ENCODE measurements at regions of chr3 and their contacts with region 1.

Region 1: GRCh38 chr3:35908366-35909232 is 269.3 kb downstream of the ARPP21 start:
- DNase-seq: peak; percentile 69
- H3K4me3 Mint-ChIP-seq: no peak overlapping the region
- H3K27ac Mint-ChIP-seq: no peak overlapping the region
- H3K4me1 Mint-ChIP-seq: no peaks in the 10 kb centered on the region
- H3K27me3 Mint-ChIP-seq: no peaks in the 10 kb centered on the region
- CTCF ChIP-seq: peak; percentile 72

Region 2: DNA sequence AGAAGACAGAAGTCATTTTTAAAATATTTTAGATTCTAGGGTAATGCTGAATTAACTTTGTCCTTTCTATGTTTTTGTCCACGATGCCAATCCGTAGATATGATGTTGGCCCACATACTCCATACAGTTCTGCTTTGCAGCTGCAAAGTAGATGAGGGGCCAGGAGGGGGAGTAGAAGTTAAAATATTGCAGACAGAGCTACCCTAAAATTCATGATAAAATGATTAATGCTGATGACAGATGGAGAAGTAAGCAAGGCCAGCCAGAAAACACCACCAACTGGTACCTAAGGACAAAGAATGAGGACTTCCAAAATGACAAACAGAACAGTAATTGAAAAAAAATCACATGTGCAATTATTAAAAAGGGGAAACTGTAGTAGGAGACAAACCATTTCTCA is 1025.8 kb before region 1 on chr3:
- CTCF ChIA-PET with region 1: interaction called, 3 read pairs
- intact Hi-C with region 1: loop called (anchors 5 kb)
- DNase-seq: peak; percentile 3
- H3K4me3 Mint-ChIP-seq: no peak overlapping the region
- H3K27ac Mint-ChIP-seq: no peak overlapping the region
- H3K4me1 Mint-ChIP-seq: no peaks in the 10 kb centered on the region
- H3K27me3 Mint-ChIP-seq: no peaks in the 10 kb centered on the region
- CTCF ChIP-seq: no peak

Region 3: DNA sequence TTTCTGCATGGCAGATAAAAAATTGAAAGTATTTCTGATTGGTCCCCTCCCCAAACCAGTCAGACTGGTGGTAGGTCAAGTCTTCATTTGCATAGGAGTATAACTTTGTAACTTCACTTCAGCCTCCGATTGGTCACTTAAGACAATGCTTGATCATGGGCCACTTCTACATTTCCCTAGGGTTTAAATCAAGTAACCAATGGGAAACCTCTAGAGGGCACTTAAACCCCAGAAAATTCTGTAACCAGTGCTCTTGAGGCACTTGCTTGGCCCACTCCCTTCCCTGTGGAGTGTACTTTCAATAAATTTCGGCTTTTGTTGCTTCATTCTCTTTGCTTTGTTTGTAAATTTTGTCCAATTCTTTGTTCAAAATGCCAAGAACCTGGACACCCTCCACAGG is 43.7 kb before region 1 on chr3:
- CTCF ChIA-PET with region 1: no interaction called
- intact Hi-C with region 1: no loop called
- DNase-seq: no peak
- H3K4me3 Mint-ChIP-seq: no peak overlapping the region
- H3K27ac Mint-ChIP-seq: no peak overlapping the region
- H3K4me1 Mint-ChIP-seq: no peaks in the 10 kb centered on the region
- H3K27me3 Mint-ChIP-seq: no peaks in the 10 kb centered on the region
- CTCF ChIP-seq: no peak